ENCODE measurements at regions of chr4 and their contacts with region 1.

Region 1: GRCh38 chr4:169675825-169676224 is 55.4 kb downstream of the CLCN3 start:
- DNase-seq: no peak
- ATAC-seq: no peak
- H3K4me3 Mint-ChIP-seq: no peak overlapping the region
- H3K27ac Mint-ChIP-seq: no peak overlapping the region
- H3K4me1 Mint-ChIP-seq: peaks cover 4% of the 10 kb centered on the region
- H3K27me3 Mint-ChIP-seq: no peaks in the 10 kb centered on the region
- CTCF ChIP-seq: no peak

Region 2: GRCh38 chr4:169270810-169271691 is 404.8 kb before region 1 on chr4 and contains the start of gene SH3RF1:
- CTCF ChIA-PET with region 1: no interaction called
- POLR2A ChIA-PET with region 1: no interaction called
- intact Hi-C with region 1: no loop called
- DNase-seq: peak; percentile 56
- ATAC-seq: peak; percentile 60
- H3K4me3 Mint-ChIP-seq: peak within 1 kb of the TSS; percentile 89
- H3K27ac Mint-ChIP-seq: peak within 1 kb of the TSS; percentile 75
- H3K4me1 Mint-ChIP-seq: peaks cover 25% of the 10 kb centered on the region
- H3K27me3 Mint-ChIP-seq: peaks cover 4% of the 10 kb centered on the region
- CTCF ChIP-seq: no peak
- total RNA-seq, gene SH3RF1: 6.9 and 7.1 TPM in 2 replicates

Region 3: DNA sequence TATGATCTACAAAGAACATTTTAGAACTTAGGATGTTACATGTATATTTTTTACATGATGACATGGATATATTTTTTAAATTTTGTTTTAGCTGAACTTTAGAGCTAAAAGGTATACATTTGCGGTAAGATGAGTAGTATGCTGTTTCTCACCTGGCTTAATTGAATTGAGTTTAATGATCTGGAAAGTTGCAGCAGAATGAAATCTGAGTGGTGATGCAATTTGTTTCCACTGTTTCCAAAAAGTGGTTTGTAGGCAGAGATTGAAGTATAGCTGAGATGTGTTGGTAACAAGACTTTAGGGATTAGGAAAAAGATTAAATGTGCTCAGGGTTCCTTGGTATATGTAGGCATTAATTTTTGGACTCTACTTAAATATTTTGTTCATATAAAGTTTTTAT is 13.9 kb after region 1 on chr4:
- CTCF ChIA-PET with region 1: no interaction called
- POLR2A ChIA-PET with region 1: interaction called, 11 read pairs
- intact Hi-C with region 1: no loop called
- DNase-seq: no peak
- ATAC-seq: no peak
- H3K4me3 Mint-ChIP-seq: no peak overlapping the region
- H3K27ac Mint-ChIP-seq: no peak overlapping the region
- H3K4me1 Mint-ChIP-seq: no peaks in the 10 kb centered on the region
- H3K27me3 Mint-ChIP-seq: no peaks in the 10 kb centered on the region
- CTCF ChIP-seq: no peak

Region 4: DNA sequence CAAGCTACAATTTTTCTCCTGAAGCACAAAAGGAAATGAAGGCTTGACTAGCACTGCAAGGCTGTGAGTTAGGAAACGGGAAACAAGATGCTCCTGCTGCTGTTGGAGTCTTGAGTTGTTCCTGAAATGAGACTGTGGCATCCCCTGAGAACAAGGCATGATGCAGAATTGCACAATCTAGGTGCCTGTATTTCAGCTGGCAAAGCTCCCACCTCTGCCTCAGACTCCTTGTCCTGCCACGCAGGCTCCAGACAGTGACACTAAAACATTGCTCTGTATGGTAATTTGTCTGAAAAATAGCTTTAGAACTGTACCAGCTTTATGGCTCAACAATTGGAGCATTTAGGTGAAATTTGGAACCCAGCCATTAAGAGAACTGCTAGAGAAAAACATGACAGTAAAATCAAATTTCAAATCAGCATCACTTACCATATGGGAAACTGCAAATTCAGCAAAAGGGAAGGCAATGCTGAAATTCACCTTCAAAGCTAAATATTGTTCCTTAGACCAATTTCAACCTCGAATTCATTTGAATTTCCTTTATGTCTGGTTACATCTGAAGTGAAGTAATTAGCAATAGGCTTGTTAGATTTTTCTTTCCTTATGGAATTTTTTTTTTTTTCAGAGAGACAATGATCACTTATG is 246.9 kb after region 1 on chr4:
- CTCF ChIA-PET with region 1: no interaction called
- POLR2A ChIA-PET with region 1: no interaction called
- intact Hi-C with region 1: no loop called
- DNase-seq: no peak
- ATAC-seq: no peak
- H3K4me3 Mint-ChIP-seq: no peak overlapping the region
- H3K27ac Mint-ChIP-seq: no peak overlapping the region
- H3K4me1 Mint-ChIP-seq: no peaks in the 10 kb centered on the region
- H3K27me3 Mint-ChIP-seq: no peaks in the 10 kb centered on the region
- CTCF ChIP-seq: no peak

Measured in activated B cell treated with CpG ODN at 0.5 μM for 24 hours (primary cell).